Activated naive CD4-positive, alpha-beta T cell treated with anti-CD3 and anti-CD28 coated beads, Interleukin-2, amount 10 ng/mL, durations not matched to agents 7 days and 5 days (primary cell): ENCODE measurements at regions of chr19 and their contacts with region 1.

Region 1: GRCh38 chr19:48391107-48391986 is at the start of gene KDELR1:
- DNase-seq: peak; percentile 78
- H3K4me3 Mint-ChIP-seq: peak within 1 kb of the TSS; percentile 95
- H3K27ac Mint-ChIP-seq: peak within 1 kb of the TSS; percentile 89
- H3K4me1 Mint-ChIP-seq: peaks cover 32% of the 10 kb centered on the region
- H3K27me3 Mint-ChIP-seq: peaks cover 55% of the 10 kb centered on the region

Region 2: GRCh38 chr19:48363810-48364563 is 27.4 kb before region 1 on chr19 and contains the starts of genes SYNGR4 and TMEM143:
- CTCF ChIA-PET with region 1: interaction called, 26 read pairs
- DNase-seq: peak; percentile 99
- H3K4me3 Mint-ChIP-seq: peak within 1 kb of the TSS; percentile 83
- H3K27ac Mint-ChIP-seq: peak within 1 kb of the TSS; percentile 95
- H3K4me1 Mint-ChIP-seq: peaks cover 17% of the 10 kb centered on the region
- H3K27me3 Mint-ChIP-seq: no peaks in the 10 kb centered on the region

Region 3: GRCh38 chr19:48403606-48404005 is 12.3 kb after region 1 on chr19:
- CTCF ChIA-PET with region 1: interaction called, 11 read pairs
- DNase-seq: peak; percentile 74
- H3K4me3 Mint-ChIP-seq: no peak overlapping the region
- H3K27ac Mint-ChIP-seq: peak overlapping the region; percentile 33
- H3K4me1 Mint-ChIP-seq: peaks cover 18% of the 10 kb centered on the region
- H3K27me3 Mint-ChIP-seq: peaks cover 34% of the 10 kb centered on the region